ENCODE measurements at regions of chr13 and their contacts with region 1.

Region 1: GRCh38 chr13:77062097-77062496 is 35.1 kb upstream of the FBXL3 start:
- DNase-seq: no peak
- ATAC-seq: no peak
- H3K4me3 ChIP-seq: no peak overlapping the region
- H3K4me3 Mint-ChIP-seq: no peak overlapping the region
- H3K27ac ChIP-seq: no peak overlapping the region
- H3K27ac Mint-ChIP-seq: no peak overlapping the region
- H3K4me1 ChIP-seq: peaks cover 8 to 13% of the 10 kb centered on the region in 2 donors
- H3K4me1 Mint-ChIP-seq: peaks cover 12% of the 10 kb centered on the region
- H3K27me3 ChIP-seq: no peaks in the 10 kb centered on the region
- H3K27me3 Mint-ChIP-seq: no peaks in the 10 kb centered on the region
- CTCF ChIP-seq: no peak

Region 2: DNA sequence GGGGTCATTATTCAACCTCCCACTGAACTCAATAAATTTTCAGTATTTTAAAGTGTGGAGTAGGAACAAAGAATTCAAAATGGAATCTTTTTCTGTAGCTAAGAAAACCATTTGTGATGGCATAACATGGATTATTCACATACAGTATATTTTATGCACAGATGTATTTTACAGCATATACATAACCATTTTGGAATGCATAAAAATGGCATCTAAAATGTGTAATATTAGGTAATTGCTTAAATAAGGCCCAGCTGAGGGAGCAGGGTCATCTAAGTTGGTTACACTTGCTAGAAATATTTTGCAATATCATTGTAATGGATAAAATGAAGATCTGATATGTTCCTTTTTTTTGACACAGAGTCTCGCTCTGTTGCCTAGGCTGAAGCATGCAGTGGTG is 1279.1 kb before region 1 on chr13:
- CTCF ChIA-PET with region 1: no interaction called
- POLR2A ChIA-PET with region 1: no interaction called
- intact Hi-C with region 1: no loop called
- DNase-seq: no peak
- ATAC-seq: no peak
- H3K4me3 ChIP-seq: no peak overlapping the region
- H3K4me3 Mint-ChIP-seq: no peak overlapping the region
- H3K27ac ChIP-seq: no peak overlapping the region
- H3K27ac Mint-ChIP-seq: no peak overlapping the region
- H3K4me1 ChIP-seq: no peaks in the 10 kb centered on the region
- H3K4me1 Mint-ChIP-seq: no peaks in the 10 kb centered on the region
- H3K27me3 ChIP-seq: no peaks in the 10 kb centered on the region
- H3K27me3 Mint-ChIP-seq: no peaks in the 10 kb centered on the region
- CTCF ChIP-seq: no peak

Region 3: GRCh38 chr13:77016888-77017623 is 45.0 kb before region 1 on chr13:
- CTCF ChIA-PET with region 1: interaction called, 3 read pairs
- POLR2A ChIA-PET with region 1: no interaction called
- intact Hi-C with region 1: loop called (anchors 5 kb)
- DNase-seq: no peak
- ATAC-seq: no peak
- H3K4me3 ChIP-seq: no peak overlapping the region
- H3K4me3 Mint-ChIP-seq: no peak overlapping the region
- H3K27ac ChIP-seq: no peak overlapping the region
- H3K27ac Mint-ChIP-seq: no peak overlapping the region
- H3K4me1 ChIP-seq: peaks cover 6 to 20% of the 10 kb centered on the region in 2 donors
- H3K4me1 Mint-ChIP-seq: peaks cover 40% of the 10 kb centered on the region
- H3K27me3 ChIP-seq: no peaks in the 10 kb centered on the region
- H3K27me3 Mint-ChIP-seq: no peaks in the 10 kb centered on the region
- CTCF ChIP-seq: no peak

Measured in B cell (primary cell).